Posterior cingulate gyrus (tissue), 11 donors: ENCODE measurements at regions of chr3 and their contacts with region 1.

Region 1: DNA sequence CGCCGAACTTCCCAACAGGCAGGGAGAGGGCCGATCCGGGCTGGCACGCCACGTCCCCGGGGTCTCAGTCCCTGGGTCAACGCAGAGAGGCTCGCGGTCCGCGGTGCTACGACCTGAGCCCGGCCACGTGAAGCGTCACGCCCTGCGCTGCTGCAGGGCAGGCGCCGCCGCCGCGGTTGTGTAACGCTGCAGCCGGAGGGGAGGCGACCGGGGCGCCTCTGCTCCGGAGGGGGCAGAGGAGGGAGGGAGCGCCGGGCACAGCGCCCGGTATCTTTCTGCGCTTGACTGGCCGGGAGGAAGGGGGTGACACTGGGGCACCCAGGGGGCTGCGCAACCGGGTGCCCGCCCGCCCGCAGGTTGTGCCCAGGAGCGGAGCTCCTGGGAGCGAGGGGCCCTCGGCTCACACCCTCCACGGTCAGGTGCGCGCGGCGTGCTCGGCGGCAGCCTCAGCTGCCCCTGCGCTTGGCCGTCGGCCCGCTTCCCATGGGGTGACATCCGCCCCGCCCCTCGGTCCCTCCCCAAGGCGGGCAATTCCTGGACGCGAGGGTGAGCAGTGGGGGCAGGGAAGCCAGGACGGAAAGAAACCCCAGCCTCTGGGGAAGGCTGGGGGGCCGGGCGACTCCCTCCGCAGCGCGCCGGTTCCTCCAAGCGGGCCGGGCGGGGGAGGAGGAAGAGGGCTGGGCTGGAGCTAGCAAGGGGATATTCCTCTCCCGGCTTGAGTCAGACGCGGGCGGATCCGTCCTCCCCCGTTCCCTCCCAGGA is 852 bp upstream of the BHLHE40 start:
- DNase-seq: peak; percentile 68 to 98 (median 89)

Region 2: DNA sequence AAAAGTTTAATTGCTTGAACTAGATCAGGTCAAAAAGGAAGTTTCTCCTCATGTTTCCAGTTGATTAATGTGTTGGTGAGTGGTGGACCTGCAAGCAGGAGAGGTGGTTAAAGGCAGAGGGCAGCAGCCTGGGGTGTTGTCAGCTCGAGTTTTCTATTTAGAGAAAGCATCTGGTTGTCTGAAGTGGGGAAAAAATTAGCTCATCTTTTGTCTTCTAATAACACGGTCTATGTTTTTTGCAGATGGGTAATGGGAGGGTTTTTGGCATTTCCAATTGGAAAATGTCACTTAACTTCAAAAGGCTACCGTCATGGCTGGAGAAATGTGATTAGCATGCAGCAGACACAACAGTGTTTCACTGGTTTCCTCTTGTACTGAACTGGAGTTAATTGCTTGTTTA is 362.6 kb before region 1 on chr3:
- intact Hi-C with region 1: no loop called
- DNase-seq: no peak

Region 3: DNA sequence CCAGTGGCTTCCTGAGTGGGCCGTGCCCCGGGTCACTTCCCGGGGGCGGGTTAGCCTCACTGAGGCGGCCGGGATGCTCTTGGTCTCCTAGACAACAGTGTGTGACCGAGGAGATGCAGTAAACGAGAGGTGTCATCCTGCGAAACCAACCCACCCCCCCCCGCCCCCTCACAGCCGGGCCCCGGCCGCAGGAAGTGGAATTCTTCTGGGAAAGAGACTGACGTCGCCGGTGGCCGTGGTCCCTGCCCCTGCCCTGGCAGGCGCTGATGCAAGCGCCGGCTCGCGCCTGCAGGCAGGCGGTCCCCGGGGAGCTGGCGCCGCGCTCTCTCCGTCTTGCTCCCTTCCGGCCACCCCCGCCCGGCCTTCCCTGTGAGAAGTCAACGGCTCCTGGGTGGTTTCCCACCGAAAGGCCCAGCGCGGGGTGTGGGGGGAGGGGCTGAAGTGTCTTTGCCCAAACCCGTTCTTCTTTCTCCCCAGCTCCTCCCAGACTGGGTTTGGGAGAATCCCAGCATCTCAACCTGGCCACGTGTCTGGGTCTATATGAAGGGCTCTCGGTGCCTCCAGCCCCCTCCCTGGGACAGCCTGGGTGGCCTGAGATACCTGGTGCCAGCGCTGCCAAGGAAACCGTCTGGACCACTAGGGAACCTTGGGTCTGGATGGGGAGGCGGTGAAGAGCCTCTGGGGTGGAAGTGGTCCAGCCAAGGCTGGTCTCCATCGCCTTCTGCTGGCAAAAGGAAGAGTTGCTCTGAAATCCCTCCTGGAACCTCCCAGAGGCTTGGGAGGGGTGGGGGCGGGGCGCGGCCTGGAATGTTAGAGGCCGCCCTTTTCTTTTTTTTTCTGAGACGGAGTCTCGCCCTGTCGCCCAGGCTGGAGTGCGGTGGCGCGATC is 48.2 kb after region 1 on chr3:
- intact Hi-C with region 1: loop called (anchors 2 kb)
- DNase-seq: peak; percentile 56 to 95 (median 74)